Right ventricle myocardium inferior (tissue), 1 donor: ENCODE measurements at regions of chr19 and their contacts with region 1.

Region 1: DNA sequence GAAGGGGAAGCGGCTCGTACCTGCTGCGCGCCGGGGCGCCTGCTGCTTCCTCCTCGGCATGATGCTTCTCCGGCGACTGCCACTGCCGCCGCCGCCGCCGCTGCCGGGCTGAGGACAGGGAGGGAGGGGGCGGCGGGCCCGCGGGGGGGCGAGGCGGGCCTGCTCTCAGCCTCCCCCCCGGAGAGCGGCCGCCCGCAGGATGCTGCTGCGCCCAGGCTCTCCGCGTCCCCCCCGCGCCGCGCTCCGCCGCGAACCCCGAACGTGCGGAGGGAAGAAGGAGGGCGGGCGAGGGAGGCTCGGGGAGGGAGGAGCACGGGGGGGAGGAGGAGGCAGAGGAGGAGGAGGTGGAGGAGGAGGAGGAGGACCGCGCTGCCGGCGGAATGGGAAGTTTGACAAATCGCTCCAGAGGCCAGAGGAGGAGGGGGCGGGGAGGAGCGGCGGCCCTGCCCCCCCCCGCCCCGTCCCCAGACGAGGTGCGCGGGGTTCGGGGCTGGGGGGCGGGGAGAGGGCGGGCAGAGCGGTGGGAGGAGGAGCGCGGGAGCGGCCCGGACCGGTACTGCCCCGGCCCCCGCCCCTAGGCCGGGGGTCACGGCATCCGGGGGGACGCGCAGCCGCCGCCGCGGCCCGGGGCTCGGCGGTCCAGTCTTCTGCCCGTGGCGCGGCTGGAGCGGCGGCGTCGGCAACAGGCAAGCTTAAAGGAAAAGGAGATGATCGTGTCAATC is at the start of gene TSHZ3:
- DNase-seq: peak; percentile 92
- ATAC-seq: peak; percentile 87
- total RNA-seq, gene TSHZ3: 3.5 TPM

Region 2: DNA sequence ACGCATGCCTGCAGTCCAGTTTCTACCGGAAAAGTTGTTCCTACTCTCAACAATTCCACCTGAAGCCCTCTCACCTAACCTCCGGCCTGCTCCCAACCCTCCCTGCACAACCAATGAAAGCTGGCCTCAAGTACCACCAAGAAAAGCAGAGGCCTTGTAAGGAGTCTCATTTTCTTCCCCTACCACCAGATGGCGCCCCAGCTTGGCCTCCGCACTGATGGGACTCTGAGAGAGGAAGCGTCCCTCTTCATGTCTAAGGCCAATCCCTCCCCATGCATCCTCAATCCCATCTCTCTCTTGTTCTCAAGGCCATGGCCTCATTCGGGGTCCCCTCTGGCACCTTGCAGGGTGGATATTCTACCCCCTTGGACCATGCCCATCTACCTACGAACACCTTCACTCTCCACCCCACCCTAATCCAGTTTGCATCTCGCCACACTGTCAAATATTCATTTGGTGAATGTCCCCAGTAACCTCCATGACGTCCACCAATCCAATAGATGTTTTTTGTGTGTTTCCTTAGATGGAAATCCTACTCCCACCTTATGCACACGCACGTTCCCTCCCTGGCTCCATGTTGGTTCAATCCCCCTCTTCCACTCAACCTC is 564.4 kb before region 1 on chr19:
- intact Hi-C with region 1: loop called (anchors 10 kb)
- DNase-seq: peak; percentile 82
- ATAC-seq: peak; percentile 56

Region 3: DNA sequence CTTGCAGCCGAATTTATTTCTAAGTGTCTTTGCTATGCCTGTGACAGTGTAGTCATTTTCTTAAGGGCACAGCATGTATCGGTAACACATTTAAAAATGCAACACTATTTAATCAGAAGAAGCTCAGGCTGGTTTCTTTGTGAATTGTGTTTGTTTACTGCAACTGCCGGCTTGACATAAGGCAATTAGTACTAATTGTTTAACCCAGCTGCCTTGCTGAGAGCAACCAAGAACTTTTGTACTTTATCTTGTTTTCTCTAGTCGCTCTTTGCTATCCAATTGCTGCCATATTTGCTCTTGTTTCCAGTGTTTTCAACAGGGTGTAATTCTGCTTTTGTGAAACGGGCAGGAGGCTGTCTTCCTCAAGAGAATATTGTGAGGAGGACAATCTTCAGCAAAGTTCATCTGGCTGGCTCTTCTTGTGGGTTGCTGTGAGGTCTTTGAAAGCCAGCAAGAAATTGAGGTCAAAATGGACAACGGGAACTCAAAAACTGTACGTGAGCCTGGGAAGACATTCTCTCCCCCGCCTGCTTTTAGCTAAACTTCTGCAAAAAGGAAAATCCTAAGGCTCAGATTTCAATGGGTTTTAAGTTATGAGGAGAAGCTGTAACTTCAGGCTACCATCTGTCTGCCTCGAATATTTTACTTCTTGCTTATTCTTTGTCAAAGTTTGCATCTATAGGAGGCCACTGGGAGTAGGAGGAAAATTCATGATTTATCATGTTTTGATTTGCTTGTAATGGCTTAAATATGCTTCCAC is 75.7 kb after region 1 on chr19:
- intact Hi-C with region 1: no loop called
- DNase-seq: no peak
- ATAC-seq: no peak

Region 4: DNA sequence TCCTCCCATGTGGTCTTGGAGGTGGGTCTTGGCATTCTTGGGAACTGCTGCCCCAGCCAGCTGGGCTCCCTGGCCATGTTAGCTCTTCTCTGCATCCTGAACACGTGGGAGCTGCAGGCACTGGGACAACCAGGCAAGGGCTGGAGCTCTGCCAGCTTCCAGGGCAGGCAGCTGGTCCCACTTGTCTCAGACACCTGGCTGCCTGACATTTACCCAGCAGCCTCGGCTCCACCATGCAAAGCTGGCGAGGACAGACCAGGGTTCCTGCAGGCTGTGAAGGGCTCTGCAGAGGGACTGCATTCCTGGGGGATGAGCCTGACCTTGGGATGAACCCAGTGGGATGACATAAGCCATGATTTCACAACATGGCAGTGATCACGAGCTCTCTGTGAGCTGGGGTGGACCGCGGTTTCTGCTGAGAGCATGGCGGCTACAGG is 98.9 kb after region 1 on chr19:
- intact Hi-C with region 1: loop called (anchors 5 kb)
- DNase-seq: peak; percentile 91
- ATAC-seq: peak; percentile 98